ENCODE measurements at regions of chr9 and their contacts with region 1.

Region 1: DNA sequence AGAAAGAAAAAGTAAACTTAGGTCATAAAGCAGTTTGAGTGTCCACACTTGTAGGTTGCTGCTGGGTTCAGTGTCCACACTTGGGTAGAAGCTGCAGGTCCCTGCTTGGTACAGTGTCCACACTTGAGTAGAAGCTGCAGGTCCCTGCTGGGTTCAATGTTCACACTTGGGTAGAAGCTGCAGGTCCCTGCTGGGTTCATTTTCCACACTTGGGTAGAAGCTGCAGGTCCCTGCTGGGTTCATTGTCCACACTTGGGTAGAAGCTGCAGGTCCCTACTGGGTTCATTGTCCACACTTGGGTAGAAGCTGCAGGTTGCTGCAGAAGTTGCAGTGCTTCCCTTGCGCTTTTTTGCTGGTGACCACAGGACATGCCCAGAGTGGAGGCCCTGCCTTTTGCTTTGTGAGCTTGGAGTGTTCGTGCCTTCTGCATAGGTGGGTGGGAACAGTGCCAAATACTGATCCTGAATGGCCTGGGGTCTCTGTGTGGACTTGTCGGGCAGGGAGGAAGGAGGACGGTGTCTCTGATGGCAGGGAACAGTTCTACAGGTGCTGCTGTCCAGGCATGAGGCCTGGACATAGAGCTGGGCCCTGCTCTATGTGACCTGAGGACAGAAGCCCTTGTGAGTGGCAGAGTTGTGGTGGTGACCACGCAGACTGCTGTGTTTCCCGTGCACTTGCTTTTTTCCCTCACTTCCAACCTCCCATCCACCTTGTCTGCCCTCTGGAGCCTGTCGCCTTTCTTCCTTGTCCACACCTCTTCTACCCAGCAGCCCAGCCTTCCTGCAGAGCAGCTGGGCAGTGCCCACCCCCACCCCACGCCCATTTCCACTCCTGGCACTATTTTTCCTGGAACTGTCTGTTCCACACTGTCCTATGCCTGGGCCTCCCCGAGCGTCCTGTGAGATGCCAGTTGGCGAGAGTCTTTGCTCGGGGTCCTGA is 120.8 kb downstream of the EHMT1 start:
- DNase-seq: no peak
- H3K4me3 ChIP-seq: peak overlapping the region; percentile 55
- H3K27ac ChIP-seq: peak overlapping the region; percentile 93
- H3K4me1 ChIP-seq: peaks cover 63% of the 10 kb centered on the region
- CTCF ChIP-seq: no peak

Region 2: DNA sequence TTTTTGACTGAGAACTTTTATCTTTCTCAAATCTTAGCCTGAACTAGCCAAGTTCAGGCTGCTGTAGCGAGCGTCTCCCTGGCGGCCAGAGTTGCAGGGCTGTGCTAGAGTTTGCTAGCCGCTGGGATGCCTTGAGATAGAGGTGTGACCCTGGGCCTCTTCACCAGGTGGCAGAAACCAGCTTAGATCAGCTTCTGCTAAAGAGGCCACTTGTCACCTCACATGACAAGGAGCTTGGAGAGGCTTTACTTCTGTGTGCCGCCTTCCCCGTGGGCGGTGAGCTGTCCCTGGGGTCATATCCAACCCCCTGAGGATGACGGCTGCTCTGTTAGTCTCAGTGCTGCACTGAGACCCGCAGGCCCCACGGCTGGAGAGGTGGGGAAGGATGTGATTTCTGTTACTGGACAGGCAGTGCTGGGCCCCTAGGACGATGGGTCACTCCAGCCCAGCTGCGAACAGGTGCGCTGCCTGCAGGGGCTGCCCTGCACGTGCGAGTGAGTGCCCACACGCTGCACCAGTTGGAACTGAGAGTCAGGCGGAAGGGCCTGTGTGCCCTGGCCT is 57.1 kb before region 1 on chr9:
- CTCF ChIA-PET with region 1: no interaction called
- POLR2A ChIA-PET with region 1: interaction called, 3 read pairs
- intact Hi-C with region 1: loop called (anchors 1 kb)
- DNase-seq: peak; percentile 83
- H3K4me3 ChIP-seq: peak overlapping the region; percentile 53
- H3K27ac ChIP-seq: peak overlapping the region; percentile 96
- H3K4me1 ChIP-seq: peaks cover 86% of the 10 kb centered on the region
- CTCF ChIP-seq: no peak; the same call in 1 of the 2 replicates